Ascending aorta (tissue), 2 donors: ENCODE measurements at regions of chr1 and their contacts with region 1.

Region 1: GRCh38 chr1:160085686-160086455 is 4.5 kb downstream of the KCNJ9 start:
- DNase-seq: peak in 1 of 2 donors; percentile 92
- H3K4me3 ChIP-seq: peak overlapping the region in 1 of 2 donors; percentile 39
- H3K27ac ChIP-seq: peak overlapping the region; percentile 82 to 84
- H3K4me1 ChIP-seq: peaks cover 7 to 25% of the 10 kb centered on the region in 2 donors
- H3K27me3 ChIP-seq: no peaks in the 10 kb centered on the region
- CTCF ChIP-seq: peak; percentile 74 to 87 (median 84)

Region 2: GRCh38 chr1:160031365-160032164 is 54.3 kb before region 1 on chr1 and contains the start of gene PIGM:
- intact Hi-C with region 1: loop called (anchors 5 kb)
- DNase-seq: peak; percentile 73 to 96
- H3K4me3 ChIP-seq: peak within 1 kb of the TSS; percentile 78 to 82
- H3K27ac ChIP-seq: peak within 1 kb of the TSS; percentile 37 to 71
- H3K4me1 ChIP-seq: peaks cover 0 to 9% of the 10 kb centered on the region in 2 donors
- H3K27me3 ChIP-seq: no peaks in the 10 kb centered on the region
- CTCF ChIP-seq: no peak
- total RNA-seq, gene PIGM: 6.1 TPM

Region 3: GRCh38 chr1:160046494-160047110 is 39.3 kb before region 1 on chr1:
- intact Hi-C with region 1: loop called (anchors 5 kb)
- DNase-seq: peak in 1 of 2 donors; percentile 67
- H3K4me3 ChIP-seq: peak overlapping the region; percentile 13 to 46
- H3K27ac ChIP-seq: no peak overlapping the region
- H3K4me1 ChIP-seq: peaks cover 0 to 7% of the 10 kb centered on the region in 2 donors
- H3K27me3 ChIP-seq: no peaks in the 10 kb centered on the region
- CTCF ChIP-seq: peak; percentile 55 to 70 (median 58)

Region 4: DNA sequence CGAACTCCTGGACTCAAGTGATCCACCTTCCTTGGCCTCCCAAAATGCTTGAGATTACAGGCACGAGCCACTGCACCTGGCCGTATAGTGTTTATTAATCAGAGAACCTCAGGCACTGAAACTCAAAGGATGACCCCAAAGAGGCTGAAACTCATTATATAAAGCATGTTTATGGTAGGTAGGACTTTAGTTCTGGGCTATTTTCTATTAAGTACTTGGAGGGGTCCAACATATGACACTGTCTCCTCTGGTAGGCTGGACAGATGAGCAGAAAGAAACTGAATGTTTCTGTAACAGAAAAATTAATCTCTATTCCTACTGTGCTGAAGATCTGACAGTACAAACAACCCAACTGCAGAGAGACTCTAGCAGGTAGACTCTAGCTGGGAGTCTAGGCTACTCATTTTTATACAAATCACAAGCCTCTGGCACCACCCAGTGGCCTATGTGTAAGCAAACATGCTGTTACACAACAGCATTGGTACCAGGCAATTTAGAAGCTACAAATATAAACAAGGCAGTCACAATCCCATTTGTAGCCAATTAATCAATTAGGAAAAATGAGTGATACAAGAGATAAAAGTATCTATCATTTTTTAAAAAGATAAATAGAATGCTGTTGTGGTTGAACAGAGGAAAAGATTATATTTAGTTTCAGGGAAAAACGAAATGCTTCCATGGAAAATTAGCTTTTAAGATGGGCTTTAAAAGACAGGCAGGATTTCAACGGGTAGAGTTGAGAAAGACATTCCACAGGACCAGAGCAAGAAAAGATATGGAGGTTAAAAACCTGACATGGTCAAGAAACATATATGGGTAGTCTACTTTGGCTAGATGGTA is 166.0 kb after region 1 on chr1:
- intact Hi-C with region 1: loop called (anchors 5 kb)
- DNase-seq: peak in 1 of 2 donors; percentile 82
- H3K4me3 ChIP-seq: no peak overlapping the region
- H3K27ac ChIP-seq: peak overlapping the region; percentile 13 to 61
- H3K4me1 ChIP-seq: peaks cover 0 to 21% of the 10 kb centered on the region in 2 donors
- H3K27me3 ChIP-seq: no peaks in the 10 kb centered on the region
- CTCF ChIP-seq: peak; percentile 68 to 71 (median 70)

Region 5: GRCh38 chr1:160500266-160501020 is 414.6 kb after region 1 on chr1:
- intact Hi-C with region 1: no loop called
- DNase-seq: no peak
- H3K4me3 ChIP-seq: no peak overlapping the region
- H3K27ac ChIP-seq: no peak overlapping the region
- H3K4me1 ChIP-seq: no peaks in the 10 kb centered on the region
- H3K27me3 ChIP-seq: no peaks in the 10 kb centered on the region
- CTCF ChIP-seq: no peak

Region 6: DNA sequence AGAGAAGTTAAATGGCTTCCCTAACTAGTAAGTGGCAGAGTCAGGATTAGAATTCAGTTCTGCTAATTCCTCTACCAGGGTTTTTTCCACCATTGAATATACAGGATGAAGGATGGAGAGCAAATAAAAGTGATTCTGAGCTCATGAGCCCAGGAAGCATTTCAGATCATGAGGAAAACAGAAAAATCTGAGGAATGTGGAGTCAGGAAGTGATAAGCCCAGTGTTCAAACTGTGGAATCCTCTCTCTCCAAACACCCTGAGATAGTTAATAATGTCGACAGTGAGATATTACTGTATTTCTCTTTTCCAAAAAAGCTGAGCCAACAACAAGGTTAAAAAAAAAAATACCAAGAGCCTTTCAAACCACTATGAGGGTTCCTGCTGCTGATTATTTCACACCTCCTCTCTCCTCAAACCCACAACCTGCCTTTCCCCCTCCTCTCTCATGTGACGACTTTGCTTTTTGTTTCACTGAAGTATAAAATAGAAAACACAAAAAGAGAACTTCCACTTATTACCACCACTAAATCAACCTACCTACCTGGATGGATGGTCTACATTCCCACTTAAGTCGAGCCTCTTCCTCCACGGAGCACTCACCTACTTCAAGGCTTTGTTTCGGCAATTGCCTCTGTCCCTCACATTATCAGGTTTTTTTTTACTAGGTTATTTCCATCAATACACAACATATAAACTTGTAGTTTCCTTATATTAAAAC is 552.1 kb after region 1 on chr1:
- intact Hi-C with region 1: no loop called
- DNase-seq: no peak
- H3K4me3 ChIP-seq: no peak overlapping the region
- H3K27ac ChIP-seq: no peak overlapping the region
- H3K4me1 ChIP-seq: no peaks in the 10 kb centered on the region
- H3K27me3 ChIP-seq: no peaks in the 10 kb centered on the region
- CTCF ChIP-seq: no peak